SK-N-SH (cell line): ENCODE measurements at regions of chr7 and their contacts with region 1.

Region 1: DNA sequence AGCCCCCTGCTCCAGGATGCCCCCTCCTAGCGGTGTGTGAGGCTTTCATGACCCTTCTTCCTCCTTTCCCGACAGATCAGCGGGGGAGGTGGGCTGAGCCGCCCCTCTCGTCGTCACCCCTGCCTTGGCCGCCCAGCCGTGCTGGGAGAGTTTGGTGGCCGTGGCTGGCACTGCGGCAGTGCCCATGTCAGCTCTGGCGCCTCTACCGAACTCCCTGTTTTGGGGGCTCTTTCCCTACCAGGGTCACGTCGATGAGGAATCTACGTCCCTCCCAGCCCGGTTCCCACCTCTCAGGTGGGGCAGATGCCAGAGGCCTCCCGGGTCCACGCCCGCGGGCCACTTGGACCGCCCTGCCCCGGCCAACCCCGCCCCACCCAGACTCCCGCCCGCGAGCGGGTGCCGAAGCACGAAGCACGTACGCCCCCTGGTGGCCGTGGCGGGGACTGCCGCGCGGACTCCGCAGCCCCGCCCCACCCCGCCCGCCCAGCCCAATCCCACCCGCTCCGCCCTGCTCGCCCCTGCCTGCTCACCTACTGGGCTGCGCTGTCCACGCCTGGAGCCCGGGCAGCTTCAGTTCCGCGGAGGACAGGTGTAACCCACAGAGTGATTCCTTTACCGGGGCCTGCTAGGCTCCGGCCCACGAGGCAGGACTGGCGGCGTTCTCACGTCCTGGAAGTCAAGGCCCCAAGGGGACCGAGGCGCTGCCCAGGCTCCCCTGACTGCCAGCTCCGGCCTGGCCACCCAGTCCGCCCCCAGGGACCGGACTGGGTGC is 127.1 kb downstream of the UBE2H start:
- DNase-seq: peak; percentile 97
- H3K4me3 ChIP-seq: peak overlapping the region; percentile 60 to 61
- H3K27ac ChIP-seq: peak overlapping the region; percentile 73 to 85
- H3K4me1 ChIP-seq: peaks cover 7 to 8% of the 10 kb centered on the region in 2 experiments; a peak in 3 of 4 replicates
- H3K27me3 ChIP-seq: no peaks in the 10 kb centered on the region
- CTCF ChIP-seq: peak; percentile 51
- EP300 ChIP-seq: no peak
- RAD21 ChIP-seq: peak; percentile 74

Region 2: DNA sequence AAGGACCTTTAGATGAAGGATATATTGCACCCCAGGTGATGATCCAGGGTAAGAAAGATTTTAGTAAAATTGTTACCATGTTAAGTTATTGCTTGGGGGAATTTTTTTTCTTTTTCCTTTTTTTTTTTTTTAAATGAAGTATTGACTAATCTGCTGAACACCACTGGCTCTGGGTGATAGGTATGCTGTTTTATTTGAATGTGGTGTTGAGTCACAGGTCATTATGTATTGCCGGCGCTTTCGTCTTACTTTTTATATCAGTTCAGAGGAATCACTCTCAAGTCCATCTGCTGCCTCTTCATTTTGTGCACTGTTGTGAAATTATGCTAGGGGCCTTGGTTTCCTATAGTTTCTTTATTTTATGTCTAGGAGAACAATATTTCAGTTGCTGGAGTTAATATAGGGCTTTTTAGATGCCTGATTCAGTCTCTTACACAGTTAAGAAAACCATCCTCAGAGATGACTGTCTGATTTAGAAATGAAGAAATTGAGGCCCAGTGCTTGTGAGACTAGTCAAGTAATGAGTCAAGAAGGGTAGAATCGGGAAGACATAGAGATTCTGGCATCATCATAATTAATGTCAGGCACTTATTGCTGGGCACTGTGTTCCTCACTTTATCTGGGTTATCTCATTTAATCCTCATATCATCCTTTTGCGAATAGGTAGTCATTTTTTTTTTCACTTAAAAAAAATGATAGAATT is 175.5 kb before region 1 on chr7:
- CTCF ChIA-PET with region 1: interaction called, 28 read pairs
- POLR2A ChIA-PET with region 1: no interaction called
- DNase-seq: no peak
- H3K4me3 ChIP-seq: no peak overlapping the region
- H3K27ac ChIP-seq: no peak overlapping the region
- H3K4me1 ChIP-seq: no peaks in the 10 kb centered on the region
- H3K27me3 ChIP-seq: no peaks in the 10 kb centered on the region
- CTCF ChIP-seq: no peak
- EP300 ChIP-seq: no peak
- RAD21 ChIP-seq: no peak

Region 3: DNA sequence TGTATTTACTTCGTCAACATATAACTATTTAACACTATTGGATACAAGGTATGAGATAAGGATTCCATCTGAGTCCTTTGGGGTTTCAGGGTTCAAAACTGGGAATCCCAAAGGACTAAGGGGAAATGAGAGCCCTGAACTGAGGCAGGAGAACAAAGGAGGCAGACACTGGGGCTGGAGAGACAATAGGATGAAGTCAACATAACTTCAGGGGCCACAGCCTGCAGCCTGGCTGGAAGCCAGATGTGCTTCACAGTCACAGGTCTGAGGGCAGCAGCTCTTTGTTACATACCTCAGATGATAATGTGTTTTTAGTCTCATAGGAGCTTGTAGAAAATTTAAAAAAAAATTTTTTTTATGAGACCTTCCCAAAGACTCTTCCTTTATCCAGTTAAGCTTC is 140.9 kb before region 1 on chr7:
- CTCF ChIA-PET with region 1: interaction called, 14 read pairs
- POLR2A ChIA-PET with region 1: no interaction called
- DNase-seq: no peak
- H3K4me3 ChIP-seq: no peak overlapping the region
- H3K27ac ChIP-seq: no peak overlapping the region
- H3K4me1 ChIP-seq: no peaks in the 10 kb centered on the region
- H3K27me3 ChIP-seq: no peaks in the 10 kb centered on the region
- CTCF ChIP-seq: no peak
- EP300 ChIP-seq: no peak
- RAD21 ChIP-seq: no peak

Region 4: GRCh38 chr7:129774359-129774758 is 51.3 kb before region 1 on chr7:
- CTCF ChIA-PET with region 1: interaction called, 15 read pairs
- POLR2A ChIA-PET with region 1: interaction called, 4 read pairs
- DNase-seq: peak; percentile 67
- H3K4me3 ChIP-seq: no peak overlapping the region
- H3K27ac ChIP-seq: no peak overlapping the region
- H3K4me1 ChIP-seq: peaks cover 0 to 7% of the 10 kb centered on the region in 2 experiments; a peak in 1 of 4 replicates
- H3K27me3 ChIP-seq: peaks cover 3% of the 10 kb centered on the region; the same call in 1 of the 2 replicates
- CTCF ChIP-seq: no peak
- EP300 ChIP-seq: no peak
- RAD21 ChIP-seq: no peak

Region 5: GRCh38 chr7:129804890-129805719 is 20.6 kb before region 1 on chr7:
- CTCF ChIA-PET with region 1: interaction called, 57 read pairs
- POLR2A ChIA-PET with region 1: interaction called, 3 read pairs
- DNase-seq: peak; percentile 85
- H3K4me3 ChIP-seq: no peak overlapping the region
- H3K27ac ChIP-seq: no peak overlapping the region
- H3K4me1 ChIP-seq: peaks cover 0 to 15% of the 10 kb centered on the region in 2 experiments; a peak in 1 of 4 replicates
- H3K27me3 ChIP-seq: no peaks in the 10 kb centered on the region
- CTCF ChIP-seq: no peak
- EP300 ChIP-seq: peak in 1 of 2 experiments; percentile 55; a peak in 2 of 4 replicates
- RAD21 ChIP-seq: no peak

Region 6: DNA sequence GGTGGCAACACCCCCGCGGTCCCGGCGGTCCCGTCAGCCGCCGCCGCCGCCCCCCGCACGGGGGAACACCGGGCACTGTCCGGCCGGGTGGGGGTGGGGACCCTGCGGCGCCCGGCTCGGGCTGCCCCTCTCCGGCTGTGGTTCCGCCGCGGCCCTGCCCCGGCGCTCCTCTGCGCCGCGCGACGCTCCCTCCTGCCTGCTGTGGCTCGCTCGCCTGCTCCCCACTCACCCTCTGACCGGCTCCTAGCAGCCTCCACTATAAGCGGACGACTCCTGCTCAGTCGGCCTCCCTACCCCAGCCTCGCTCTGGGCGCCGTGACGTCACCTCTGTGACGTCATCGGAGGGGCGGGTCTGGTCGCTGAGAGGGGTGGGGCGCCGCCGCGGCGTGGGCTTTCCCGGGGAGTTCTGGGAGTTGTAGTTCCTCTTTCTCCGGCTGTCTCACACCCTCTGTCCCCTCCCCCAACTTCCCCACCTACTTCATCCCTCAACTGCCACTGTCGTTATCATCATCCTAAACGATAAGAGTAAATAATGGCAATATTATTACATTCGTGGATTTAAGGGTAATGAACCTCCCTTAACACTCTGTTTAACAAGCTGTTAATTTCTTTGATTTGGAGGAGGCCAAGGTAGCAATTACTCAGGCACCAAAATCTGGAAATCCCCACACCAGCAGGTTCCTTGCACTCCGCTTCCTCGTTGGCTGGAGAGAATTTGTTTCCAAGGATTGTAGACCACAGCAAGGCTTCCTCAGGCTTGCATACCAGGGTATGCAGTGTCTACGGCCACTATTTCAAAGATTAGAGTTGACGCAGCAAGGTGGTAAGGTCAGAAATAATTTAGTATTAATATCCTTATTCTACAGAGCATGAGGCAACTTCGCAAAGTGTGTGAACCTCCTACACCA is 127.2 kb after region 1 on chr7 and contains the start of gene UBE2H:
- CTCF ChIA-PET with region 1: interaction called, 35 read pairs
- POLR2A ChIA-PET with region 1: interaction called, 3 read pairs
- DNase-seq: peak; percentile 100
- H3K4me3 ChIP-seq: peak within 1 kb of the TSS; percentile 78 to 86
- H3K27ac ChIP-seq: peak within 1 kb of the TSS; percentile 90 to 97
- H3K4me1 ChIP-seq: peaks cover 8 to 14% of the 10 kb centered on the region in 2 experiments
- H3K27me3 ChIP-seq: no peaks in the 10 kb centered on the region
- CTCF ChIP-seq: no peak
- EP300 ChIP-seq: peak in 1 of 2 experiments; percentile 13; a peak in 1 of 4 replicates
- RAD21 ChIP-seq: peak; percentile 16; the same call in 1 of the 2 replicates
- polyA plus RNA-seq, gene UBE2H: 129 and 162 TPM in 2 replicates